Right ventricle myocardium superior (tissue), 1 donor: ENCODE measurements at regions of chr2 and their contacts with region 1.

Region 1: GRCh38 chr2:86623651-86624541 is at the start of gene RNF103:
- DNase-seq: peak; percentile 99
- ATAC-seq: peak; percentile 96
- total RNA-seq, gene RNF103: 51.7 TPM

Region 2: DNA sequence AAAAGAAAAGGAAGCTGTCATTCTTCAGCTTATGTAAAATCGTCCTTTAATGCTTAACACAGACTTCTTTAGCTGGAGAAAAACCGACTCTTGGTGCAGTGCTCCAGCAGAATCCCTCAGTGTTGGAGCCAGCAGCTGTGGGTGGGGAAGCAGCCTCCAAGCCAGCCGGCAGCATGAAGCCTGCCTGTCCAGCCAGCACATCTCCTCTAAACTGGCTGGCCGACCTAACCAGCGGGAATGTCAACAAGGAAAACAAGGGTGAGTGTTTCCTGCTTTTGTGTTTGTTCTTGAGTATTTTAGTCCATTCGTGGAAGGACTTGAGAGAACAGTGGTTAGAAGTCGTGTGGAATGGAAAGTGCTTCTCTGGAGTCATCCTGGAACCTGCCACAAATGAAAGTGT is 143.8 kb before region 1 on chr2:
- intact Hi-C with region 1: no loop called
- DNase-seq: peak; percentile 59
- ATAC-seq: peak; percentile 78

Region 3: GRCh38 chr2:86541334-86541733 is 82.6 kb before region 1 on chr2:
- intact Hi-C with region 1: no loop called
- DNase-seq: no peak
- ATAC-seq: peak; percentile 63

Region 4: DNA sequence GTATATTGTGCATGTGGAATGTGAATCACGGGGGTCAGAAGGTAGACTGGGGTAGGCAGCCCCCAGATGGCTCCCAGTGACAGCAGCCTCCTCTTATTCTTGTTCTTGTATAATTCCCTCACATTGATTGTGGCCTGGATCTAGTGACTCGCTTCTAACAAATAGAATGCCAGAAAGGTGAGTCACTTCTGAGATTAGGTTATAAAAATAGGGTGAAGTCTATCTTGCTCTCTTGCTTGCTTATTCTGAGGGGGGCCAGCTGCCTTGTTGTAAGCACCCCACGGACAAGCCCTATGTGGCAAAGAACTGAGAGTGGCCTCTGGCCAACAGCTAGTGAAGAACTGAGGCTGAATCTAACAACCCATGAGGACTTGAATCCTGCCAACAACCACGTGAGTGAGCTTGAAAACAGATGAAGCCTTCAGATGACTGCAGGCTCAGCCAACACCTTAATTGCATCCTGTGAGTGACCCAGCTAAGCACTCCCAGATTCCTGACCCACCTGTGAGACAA is 80.6 kb after region 1 on chr2:
- intact Hi-C with region 1: loop called (anchors 5 kb)
- DNase-seq: peak; percentile 56
- ATAC-seq: peak; percentile 88

Region 5: DNA sequence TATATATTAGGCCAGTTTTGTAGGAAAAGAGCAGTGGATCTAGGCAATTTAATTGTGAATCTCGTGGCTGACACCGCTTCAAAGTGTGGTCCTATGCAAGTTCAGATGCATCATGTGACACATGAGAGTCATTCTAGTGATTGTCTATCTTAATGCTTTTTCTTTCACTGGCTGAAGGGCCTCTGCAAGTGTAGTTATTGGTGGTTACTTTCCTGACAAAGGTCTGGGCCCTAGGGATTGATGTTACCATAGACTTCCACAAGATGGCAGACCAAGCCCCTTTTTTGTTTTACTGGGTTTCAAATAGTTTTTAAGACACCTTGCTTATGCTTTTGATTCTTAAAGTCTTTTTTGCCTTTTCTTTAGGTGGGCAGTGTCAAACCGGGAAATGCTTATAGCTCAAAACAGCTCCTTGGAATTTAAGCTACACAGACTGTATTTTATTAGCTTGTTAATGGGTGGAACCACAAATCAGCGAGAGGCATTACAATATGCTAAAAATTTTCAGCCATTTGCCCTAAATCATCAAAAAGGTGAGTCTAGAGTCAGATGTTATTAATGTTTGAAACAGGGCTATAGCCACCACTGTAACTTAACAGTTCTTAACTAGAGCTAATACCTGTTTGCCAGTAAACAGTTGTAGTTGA is 140.9 kb after region 1 on chr2:
- intact Hi-C with region 1: loop called (anchors 10 kb)
- DNase-seq: no peak
- ATAC-seq: peak; percentile 55